WTC11 (cell line): ENCODE measurements at regions of chr3 and their contacts with region 1.

Region 1: DNA sequence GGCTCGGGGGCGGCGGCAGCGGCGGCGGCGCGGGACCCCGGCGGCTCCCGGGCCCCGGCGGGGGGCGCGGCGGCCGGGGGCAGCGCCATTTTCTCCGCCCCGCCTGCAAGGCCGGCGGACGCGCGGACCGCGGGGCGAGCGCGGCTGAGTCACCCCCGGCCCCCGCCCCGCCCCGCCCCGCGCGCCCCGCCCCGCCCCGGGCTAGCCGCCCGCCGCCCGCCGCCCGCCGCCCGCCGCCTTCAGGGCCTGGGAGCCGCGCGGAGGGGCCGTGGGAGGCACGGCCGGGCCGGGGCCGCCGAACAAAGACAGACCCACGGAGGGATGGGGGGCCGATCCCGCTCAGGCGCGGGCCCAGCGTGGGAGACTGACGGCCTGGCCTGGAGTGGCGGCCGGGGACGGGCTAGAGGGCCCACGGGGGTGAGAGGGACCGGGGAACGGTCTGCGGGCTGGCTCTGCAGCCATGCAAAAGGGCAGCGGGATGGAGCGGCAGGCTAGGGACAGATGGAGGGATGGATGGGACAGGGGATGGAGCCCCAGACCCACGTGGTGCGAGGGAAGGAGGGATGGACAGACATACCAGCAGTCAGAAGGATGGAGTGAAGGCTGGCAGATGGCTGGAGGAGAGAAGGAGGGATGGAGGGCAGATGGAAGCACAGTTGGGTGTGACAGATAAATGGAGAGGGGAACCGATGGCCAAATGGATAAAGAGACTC is at the start of gene EIF4E3:
- DNase-seq: peak; percentile 52
- ATAC-seq: peak; percentile 34
- H3K4me3 Mint-ChIP-seq: peak within 1 kb of the TSS; percentile 78
- H3K27ac Mint-ChIP-seq: no peak within 1 kb of the TSS
- H3K4me1 Mint-ChIP-seq: peaks cover 40% of the 10 kb centered on the region
- H3K27me3 Mint-ChIP-seq: peaks cover 35% of the 10 kb centered on the region
- CTCF ChIP-seq: no peak
- total RNA-seq, gene EIF4E3: 14.0 to 16.5 TPM (median 14.3 TPM) in 3 replicates

Region 2: GRCh38 chr3:71752831-71753629 is 27.6 kb after region 1 on chr3:
- CTCF ChIA-PET with region 1: interaction called, 14 read pairs
- POLR2A ChIA-PET with region 1: no interaction called
- DNase-seq: no peak
- ATAC-seq: peak; percentile 43
- H3K4me3 Mint-ChIP-seq: peak overlapping the region; percentile 74
- H3K27ac Mint-ChIP-seq: no peak overlapping the region
- H3K4me1 Mint-ChIP-seq: peaks cover 19% of the 10 kb centered on the region
- H3K27me3 Mint-ChIP-seq: peaks cover 46% of the 10 kb centered on the region
- CTCF ChIP-seq: no peak

Region 3: GRCh38 chr3:71784914-71785531 is 59.6 kb after region 1 on chr3 and contains the start of gene PROK2:
- CTCF ChIA-PET with region 1: interaction called, 13 read pairs
- POLR2A ChIA-PET with region 1: no interaction called
- DNase-seq: peak; percentile 52
- ATAC-seq: peak; percentile 47
- H3K4me3 Mint-ChIP-seq: peak within 1 kb of the TSS; percentile 84
- H3K27ac Mint-ChIP-seq: no peak within 1 kb of the TSS; the same call in 1 of the 2 replicates
- H3K4me1 Mint-ChIP-seq: peaks cover 44% of the 10 kb centered on the region
- H3K27me3 Mint-ChIP-seq: peaks cover 66% of the 10 kb centered on the region
- CTCF ChIP-seq: no peak
- total RNA-seq, gene PROK2: 0.92 to 2.0 TPM (median 1.4 TPM) in 3 replicates

Region 4: DNA sequence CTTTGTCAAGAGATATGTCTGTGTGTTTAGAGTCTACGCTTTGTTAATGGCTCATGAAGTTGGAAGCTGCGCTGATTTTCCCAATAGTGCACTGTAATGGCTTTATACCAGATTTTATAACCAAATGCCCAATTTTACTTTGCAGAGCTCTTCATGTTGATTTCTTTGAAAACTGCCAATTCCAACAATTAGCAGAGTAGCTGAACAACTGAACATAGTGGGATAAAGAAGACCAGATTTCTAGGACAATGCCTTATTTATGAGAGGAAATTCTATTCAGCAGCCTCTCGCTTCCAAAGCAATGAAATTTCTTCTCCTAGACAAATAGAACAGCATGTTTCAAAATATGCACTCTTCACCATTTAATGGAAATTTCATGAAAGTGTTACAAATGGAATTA is 126.4 kb after region 1 on chr3:
- CTCF ChIA-PET with region 1: interaction called, 53 read pairs
- POLR2A ChIA-PET with region 1: no interaction called
- DNase-seq: no peak
- ATAC-seq: no peak
- H3K4me3 Mint-ChIP-seq: no peak overlapping the region
- H3K27ac Mint-ChIP-seq: no peak overlapping the region
- H3K4me1 Mint-ChIP-seq: peaks cover 5% of the 10 kb centered on the region; the same call in 1 of the 2 replicates
- H3K27me3 Mint-ChIP-seq: no peaks in the 10 kb centered on the region
- CTCF ChIP-seq: no peak

Region 5: GRCh38 chr3:71987828-71988227 is 262.4 kb after region 1 on chr3:
- CTCF ChIA-PET with region 1: no interaction called
- POLR2A ChIA-PET with region 1: no interaction called
- DNase-seq: no peak
- ATAC-seq: 0 out of 2 replicates have a peak, but pooled peaks have one; percentile 28
- H3K4me3 Mint-ChIP-seq: no peak overlapping the region
- H3K27ac Mint-ChIP-seq: no peak overlapping the region
- H3K4me1 Mint-ChIP-seq: peaks cover 13% of the 10 kb centered on the region
- H3K27me3 Mint-ChIP-seq: no peaks in the 10 kb centered on the region
- CTCF ChIP-seq: no peak